ENCODE measurements at regions of chr12 and their contacts with region 1.

Region 1: GRCh38 chr12:30754709-30755394 is at the start of gene CAPRIN2:
- DNase-seq: peak; percentile 93
- H3K4me3 Mint-ChIP-seq: peak within 1 kb of the TSS; percentile 95
- H3K27ac Mint-ChIP-seq: peak within 1 kb of the TSS; percentile 79
- H3K4me1 Mint-ChIP-seq: peaks cover 33% of the 10 kb centered on the region
- H3K27me3 Mint-ChIP-seq: no peaks in the 10 kb centered on the region
- CTCF ChIP-seq: peak; percentile 21
- total RNA-seq, gene CAPRIN2: 33.0 and 33.3 TPM in 2 replicates

Region 2: DNA sequence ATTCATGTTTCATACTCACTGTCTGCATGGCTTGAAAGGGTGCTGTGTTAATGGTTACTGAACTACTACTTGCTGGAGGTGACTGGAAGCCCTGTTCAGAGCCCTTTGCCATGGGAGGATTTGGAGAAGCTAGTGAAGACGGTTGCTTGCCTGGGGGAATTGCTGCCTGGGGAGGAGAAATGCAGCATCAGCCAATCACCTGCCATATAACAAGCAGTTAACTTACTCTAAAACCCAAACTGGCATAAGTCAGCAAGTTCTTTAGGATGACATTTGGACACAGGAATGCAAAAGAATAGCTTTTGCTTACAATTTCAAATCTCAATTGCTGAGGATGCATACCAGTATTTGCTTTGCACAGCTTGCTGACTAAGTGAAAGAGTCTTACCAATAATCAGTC is 35.8 kb before region 1 on chr12:
- CTCF ChIA-PET with region 1: interaction called, 3 read pairs
- POLR2A ChIA-PET with region 1: interaction called, 35 read pairs
- intact Hi-C with region 1: no loop called
- DNase-seq: peak; percentile 7
- H3K4me3 Mint-ChIP-seq: no peak overlapping the region
- H3K27ac Mint-ChIP-seq: no peak overlapping the region
- H3K4me1 Mint-ChIP-seq: peaks cover 5% of the 10 kb centered on the region
- H3K27me3 Mint-ChIP-seq: no peaks in the 10 kb centered on the region
- CTCF ChIP-seq: no peak

Region 3: DNA sequence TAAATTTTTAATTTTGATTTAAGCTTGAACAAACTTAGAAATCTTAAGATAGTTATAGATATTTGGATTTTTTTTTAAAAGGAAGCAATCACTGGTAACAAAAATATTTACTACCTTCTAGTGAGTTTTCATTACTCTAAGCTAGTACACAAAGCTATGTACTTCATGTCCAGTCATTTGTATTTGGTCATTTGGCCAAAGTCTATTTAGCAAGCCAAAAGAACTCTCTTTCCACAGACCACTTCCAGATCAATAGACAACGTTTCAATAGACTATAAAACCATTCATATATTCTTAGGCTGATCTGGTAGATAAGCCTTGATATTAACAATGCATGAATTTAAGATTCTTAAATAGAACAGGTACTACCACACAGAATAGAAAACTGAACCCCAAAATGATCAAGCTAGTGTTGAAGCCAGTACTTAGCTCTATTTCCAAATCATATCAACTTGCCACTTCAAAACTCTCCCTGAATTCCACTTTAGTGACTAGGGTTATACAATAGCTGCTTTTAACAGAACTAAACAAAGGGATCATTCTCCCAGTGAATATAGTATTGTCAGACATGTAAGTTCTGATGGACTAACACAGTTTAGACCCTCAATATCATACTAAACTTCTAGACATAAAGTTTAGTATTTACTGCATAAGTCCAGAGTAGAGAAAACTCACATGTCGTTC is 21.8 kb before region 1 on chr12:
- CTCF ChIA-PET with region 1: interaction called, 3 read pairs
- POLR2A ChIA-PET with region 1: interaction called, 14 read pairs
- intact Hi-C with region 1: no loop called
- DNase-seq: no peak
- H3K4me3 Mint-ChIP-seq: no peak overlapping the region
- H3K27ac Mint-ChIP-seq: no peak overlapping the region
- H3K4me1 Mint-ChIP-seq: no peaks in the 10 kb centered on the region
- H3K27me3 Mint-ChIP-seq: no peaks in the 10 kb centered on the region
- CTCF ChIP-seq: no peak

Region 4: GRCh38 chr12:30779178-30779577 is 24.3 kb after region 1 on chr12:
- CTCF ChIA-PET with region 1: no interaction called
- POLR2A ChIA-PET with region 1: no interaction called
- intact Hi-C with region 1: no loop called
- DNase-seq: no peak
- H3K4me3 Mint-ChIP-seq: no peak overlapping the region
- H3K27ac Mint-ChIP-seq: no peak overlapping the region
- H3K4me1 Mint-ChIP-seq: no peaks in the 10 kb centered on the region
- H3K27me3 Mint-ChIP-seq: no peaks in the 10 kb centered on the region
- CTCF ChIP-seq: no peak

Region 5: DNA sequence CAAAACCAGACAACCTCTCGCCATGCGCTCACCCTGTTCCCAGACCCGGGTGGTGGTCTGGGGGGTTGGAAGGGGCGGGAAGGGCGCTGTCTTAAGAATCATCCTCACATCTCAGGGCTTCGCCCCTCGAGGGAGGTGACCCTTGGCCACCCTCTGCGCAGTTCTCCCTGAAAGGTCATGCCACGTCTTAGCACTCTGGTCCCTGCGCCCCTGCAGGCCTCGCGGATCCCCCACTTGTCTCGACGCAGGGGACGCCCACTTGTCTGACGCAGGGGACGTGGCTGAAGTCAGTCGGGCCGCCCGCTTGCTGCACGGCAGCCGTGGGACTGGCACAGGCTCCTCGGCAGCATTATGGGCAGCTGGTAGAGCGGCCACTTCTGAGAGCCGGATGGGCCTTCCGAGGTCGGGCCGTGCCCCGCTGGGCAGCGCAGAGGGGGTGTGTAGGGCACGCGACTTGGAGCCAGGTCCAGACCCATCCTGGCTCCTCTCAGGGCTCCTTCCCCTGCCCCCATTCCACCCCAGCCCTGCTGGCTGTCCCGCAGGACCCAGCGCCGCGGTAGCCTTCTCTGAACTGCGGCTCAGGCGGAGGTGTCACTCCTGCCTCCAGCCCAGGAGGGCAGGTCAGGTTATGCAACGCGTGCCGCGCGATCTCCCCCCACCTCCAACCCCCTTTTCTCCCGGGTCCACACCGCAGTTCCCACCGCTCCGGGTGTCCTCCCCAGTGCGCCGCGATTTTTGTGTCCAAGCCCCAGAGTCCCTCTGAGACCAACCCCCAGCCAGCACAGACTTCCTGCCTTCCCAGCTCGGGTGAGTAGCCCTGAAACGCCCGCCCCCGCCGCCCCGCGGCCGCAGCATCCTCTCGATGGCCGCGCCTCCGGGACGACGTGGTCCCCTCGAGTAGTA is 40.8 kb after region 1 on chr12:
- CTCF ChIA-PET with region 1: interaction called, 37 read pairs
- POLR2A ChIA-PET with region 1: interaction called, 81 read pairs
- intact Hi-C with region 1: loop called (anchors 1 kb)
- DNase-seq: peak; percentile 83
- H3K4me3 Mint-ChIP-seq: peak overlapping the region; percentile 79
- H3K27ac Mint-ChIP-seq: peak overlapping the region; percentile 67
- H3K4me1 Mint-ChIP-seq: peaks cover 49% of the 10 kb centered on the region
- H3K27me3 Mint-ChIP-seq: no peaks in the 10 kb centered on the region
- CTCF ChIP-seq: no peak

Region 6: GRCh38 chr12:30813525-30814294 is 58.9 kb after region 1 on chr12:
- CTCF ChIA-PET with region 1: no interaction called
- POLR2A ChIA-PET with region 1: no interaction called
- intact Hi-C with region 1: no loop called
- DNase-seq: peak; percentile 69
- H3K4me3 Mint-ChIP-seq: no peak overlapping the region
- H3K27ac Mint-ChIP-seq: no peak overlapping the region
- H3K4me1 Mint-ChIP-seq: no peaks in the 10 kb centered on the region
- H3K27me3 Mint-ChIP-seq: no peaks in the 10 kb centered on the region
- CTCF ChIP-seq: no peak

Region 7: DNA sequence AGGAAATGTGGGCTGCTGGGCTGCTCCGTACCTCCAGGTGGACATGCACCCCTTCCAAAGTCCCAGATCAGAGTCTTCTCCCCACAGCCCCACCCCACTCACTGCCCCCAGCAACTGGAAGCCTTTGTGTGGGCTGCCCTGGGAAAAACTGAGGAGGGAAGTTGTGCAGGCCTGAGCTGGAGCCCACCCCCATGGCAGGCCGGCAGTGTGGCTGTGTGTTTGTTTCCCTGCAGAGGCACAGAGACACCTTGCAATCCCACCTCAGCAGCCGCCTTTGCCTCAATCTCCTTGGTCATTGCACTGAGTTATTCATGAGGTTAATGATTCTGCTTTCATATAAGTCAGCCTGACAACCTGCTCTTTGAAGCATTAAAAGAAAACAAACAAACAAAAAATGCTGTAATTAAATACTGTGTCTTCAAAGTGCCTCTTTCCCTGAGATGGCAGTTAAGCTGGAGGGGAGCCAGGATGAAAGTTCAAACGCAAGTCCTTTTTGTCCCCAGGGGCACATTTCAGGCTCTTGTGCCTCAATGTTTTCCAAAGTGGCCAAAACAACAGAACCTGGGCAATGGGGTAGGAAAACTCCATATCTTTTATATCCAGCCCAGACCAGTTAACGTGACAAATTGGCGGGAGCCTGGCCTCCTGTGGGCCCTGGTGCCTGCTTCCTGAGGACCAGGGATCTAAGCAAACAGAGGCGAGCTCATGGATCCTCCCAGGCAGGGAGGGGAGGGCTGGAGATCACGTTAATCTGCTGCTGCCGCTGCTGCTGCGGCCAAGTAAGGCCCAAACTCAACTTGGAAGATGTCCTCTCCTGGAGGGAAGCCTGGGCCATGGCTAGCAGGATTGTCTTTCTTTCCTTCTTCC is 119.8 kb after region 1 on chr12:
- CTCF ChIA-PET with region 1: no interaction called
- POLR2A ChIA-PET with region 1: no interaction called
- intact Hi-C with region 1: no loop called
- DNase-seq: no peak
- H3K4me3 Mint-ChIP-seq: no peak overlapping the region
- H3K27ac Mint-ChIP-seq: no peak overlapping the region
- H3K4me1 Mint-ChIP-seq: peaks cover 5% of the 10 kb centered on the region
- H3K27me3 Mint-ChIP-seq: peaks cover 51% of the 10 kb centered on the region
- CTCF ChIP-seq: no peak

Region 8: GRCh38 chr12:31618228-31619025 is 863.6 kb after region 1 on chr12:
- CTCF ChIA-PET with region 1: no interaction called
- POLR2A ChIA-PET with region 1: no interaction called
- intact Hi-C with region 1: no loop called
- DNase-seq: no peak
- H3K4me3 Mint-ChIP-seq: no peak overlapping the region
- H3K27ac Mint-ChIP-seq: no peak overlapping the region
- H3K4me1 Mint-ChIP-seq: no peaks in the 10 kb centered on the region
- H3K27me3 Mint-ChIP-seq: no peaks in the 10 kb centered on the region
- CTCF ChIP-seq: no peak